ENCODE measurements at regions of chr10 and their contacts with region 1.

Region 1: DNA sequence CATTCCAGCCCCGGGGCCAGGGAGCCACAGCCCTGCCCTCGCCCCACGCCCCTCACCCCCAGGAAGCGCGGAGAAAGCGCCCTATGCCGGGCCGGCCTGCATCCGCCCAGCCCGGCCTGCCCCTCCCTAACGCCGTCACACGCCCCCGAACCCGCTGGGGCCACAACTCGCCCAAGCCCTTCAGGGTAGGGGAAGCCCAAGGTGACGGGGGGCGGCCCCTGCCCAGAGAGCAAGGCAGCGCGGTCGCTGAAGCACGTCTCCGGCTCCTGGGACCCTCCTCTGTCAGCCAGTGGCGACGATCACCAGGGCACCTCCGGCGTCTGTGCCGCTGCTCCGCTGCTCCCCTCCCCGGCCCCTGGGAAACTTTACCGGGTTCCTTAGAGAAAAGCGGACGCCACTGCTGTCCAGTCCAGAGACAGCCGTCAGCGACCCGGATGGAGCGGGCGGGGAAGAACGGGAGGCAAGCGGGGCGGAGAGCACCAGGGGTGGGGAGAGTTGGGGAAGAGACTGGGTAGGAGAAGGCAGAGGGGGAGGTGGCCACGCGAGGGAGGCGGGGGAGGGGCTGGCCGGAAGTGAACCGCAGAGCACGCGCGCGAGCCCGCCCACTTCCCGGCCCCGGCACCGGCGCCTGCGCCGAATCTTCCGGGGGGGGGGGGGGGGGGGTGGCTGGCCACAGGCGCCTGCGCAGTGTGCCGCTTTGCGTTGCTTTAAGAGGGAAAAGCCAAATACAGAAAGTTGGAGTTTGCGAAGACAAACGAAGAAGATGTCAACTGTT is at the start of gene HERC4:
- DNase-seq: peak; percentile 93
- H3K4me3 Mint-ChIP-seq: peak within 1 kb of the TSS; percentile 95
- H3K27ac Mint-ChIP-seq: peak within 1 kb of the TSS; percentile 93
- H3K4me1 Mint-ChIP-seq: peaks cover 12% of the 10 kb centered on the region
- H3K27me3 Mint-ChIP-seq: no peaks in the 10 kb centered on the region
- CTCF ChIP-seq: no peak
- total RNA-seq, gene HERC4: 57.5 and 61.5 TPM in 2 replicates

Region 2: DNA sequence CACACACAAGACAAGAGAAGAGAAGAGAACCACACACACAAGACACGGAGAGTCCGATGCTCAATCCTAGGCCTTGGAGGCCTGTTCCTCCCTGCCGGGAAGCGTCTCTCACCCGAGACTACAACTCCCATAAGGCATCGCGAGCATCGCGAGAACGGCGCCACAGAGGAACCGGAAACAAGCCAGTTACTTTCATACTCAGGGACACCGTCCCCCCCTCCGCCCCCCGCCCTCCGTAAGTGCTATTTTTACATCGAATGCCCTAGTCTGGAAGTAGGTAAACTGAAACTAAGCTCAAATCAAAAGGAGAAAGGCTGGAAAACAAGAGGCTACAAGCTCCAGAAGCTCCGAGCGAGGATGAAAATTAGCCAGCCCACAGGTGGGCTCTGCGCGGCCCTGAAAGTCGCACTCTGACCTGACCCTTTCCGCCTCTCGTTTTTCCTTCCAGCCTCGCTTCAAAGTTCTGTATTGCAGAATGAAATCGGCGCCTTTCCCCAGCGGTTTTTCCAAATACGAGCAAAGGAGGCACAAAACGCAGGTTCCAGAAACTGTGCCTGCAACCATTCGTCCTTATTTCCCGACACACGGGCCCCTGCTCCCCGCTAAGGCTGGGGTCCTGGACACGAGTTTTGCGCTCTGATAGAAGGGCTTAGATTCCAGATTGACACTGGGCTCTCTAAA is 225.5 kb before region 1 on chr10:
- CTCF ChIA-PET with region 1: no interaction called
- POLR2A ChIA-PET with region 1: interaction called, 12 read pairs
- intact Hi-C with region 1: no loop called
- DNase-seq: peak; percentile 94
- H3K4me3 Mint-ChIP-seq: peak overlapping the region; percentile 88
- H3K27ac Mint-ChIP-seq: peak overlapping the region; percentile 94
- H3K4me1 Mint-ChIP-seq: no peaks in the 10 kb centered on the region
- H3K27me3 Mint-ChIP-seq: no peaks in the 10 kb centered on the region
- CTCF ChIP-seq: no peak

Region 3: GRCh38 chr10:67861750-67862460 is 213.1 kb before region 1 on chr10:
- CTCF ChIA-PET with region 1: no interaction called
- POLR2A ChIA-PET with region 1: no interaction called
- intact Hi-C with region 1: loop called (anchors 5 kb)
- DNase-seq: no peak
- H3K4me3 Mint-ChIP-seq: no peak overlapping the region
- H3K27ac Mint-ChIP-seq: no peak overlapping the region
- H3K4me1 Mint-ChIP-seq: no peaks in the 10 kb centered on the region
- H3K27me3 Mint-ChIP-seq: no peaks in the 10 kb centered on the region
- CTCF ChIP-seq: no peak

Region 4: DNA sequence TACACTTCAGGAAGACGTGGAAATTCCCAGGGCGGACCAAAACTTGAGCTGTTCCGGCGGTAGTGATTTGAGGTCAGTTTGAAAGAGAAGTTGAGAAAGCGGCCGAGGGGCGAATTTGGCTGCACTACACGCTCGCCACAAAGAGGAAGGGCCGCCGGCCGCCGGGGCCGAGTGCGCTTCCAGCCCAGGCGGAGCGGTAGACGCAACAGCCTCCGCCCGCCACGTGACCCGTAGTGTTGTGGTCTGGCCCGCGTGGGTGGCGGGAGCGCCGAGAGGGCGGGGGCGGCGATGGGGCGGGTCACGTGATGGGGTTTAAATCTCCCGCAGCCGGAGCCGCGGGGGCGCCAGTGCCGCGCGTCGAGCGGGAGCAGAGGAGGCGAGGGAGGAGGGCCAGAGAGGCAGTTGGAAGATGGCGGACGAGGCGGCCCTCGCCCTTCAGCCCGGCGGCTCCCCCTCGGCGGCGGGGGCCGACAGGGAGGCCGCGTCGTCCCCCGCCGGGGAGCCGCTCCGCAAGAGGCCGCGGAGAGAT is 190.6 kb before region 1 on chr10 and contains the start of gene SIRT1:
- CTCF ChIA-PET with region 1: no interaction called
- POLR2A ChIA-PET with region 1: interaction called, 9 read pairs
- intact Hi-C with region 1: loop called (anchors 1 kb)
- DNase-seq: peak; percentile 93
- H3K4me3 Mint-ChIP-seq: peak within 1 kb of the TSS; percentile 78
- H3K27ac Mint-ChIP-seq: peak within 1 kb of the TSS; percentile 95
- H3K4me1 Mint-ChIP-seq: peaks cover 12% of the 10 kb centered on the region
- H3K27me3 Mint-ChIP-seq: no peaks in the 10 kb centered on the region
- CTCF ChIP-seq: no peak
- total RNA-seq, gene SIRT1: 17.9 and 23.2 TPM in 2 replicates

Region 5: GRCh38 chr10:68088744-68089143 is 13.8 kb after region 1 on chr10:
- CTCF ChIA-PET with region 1: no interaction called
- POLR2A ChIA-PET with region 1: interaction called, 15 read pairs
- intact Hi-C with region 1: no loop called
- DNase-seq: peak; percentile 67
- H3K4me3 Mint-ChIP-seq: peak overlapping the region; percentile 50
- H3K27ac Mint-ChIP-seq: peak overlapping the region; percentile 94
- H3K4me1 Mint-ChIP-seq: peaks cover 27% of the 10 kb centered on the region
- H3K27me3 Mint-ChIP-seq: no peaks in the 10 kb centered on the region
- CTCF ChIP-seq: no peak

Region 6: DNA sequence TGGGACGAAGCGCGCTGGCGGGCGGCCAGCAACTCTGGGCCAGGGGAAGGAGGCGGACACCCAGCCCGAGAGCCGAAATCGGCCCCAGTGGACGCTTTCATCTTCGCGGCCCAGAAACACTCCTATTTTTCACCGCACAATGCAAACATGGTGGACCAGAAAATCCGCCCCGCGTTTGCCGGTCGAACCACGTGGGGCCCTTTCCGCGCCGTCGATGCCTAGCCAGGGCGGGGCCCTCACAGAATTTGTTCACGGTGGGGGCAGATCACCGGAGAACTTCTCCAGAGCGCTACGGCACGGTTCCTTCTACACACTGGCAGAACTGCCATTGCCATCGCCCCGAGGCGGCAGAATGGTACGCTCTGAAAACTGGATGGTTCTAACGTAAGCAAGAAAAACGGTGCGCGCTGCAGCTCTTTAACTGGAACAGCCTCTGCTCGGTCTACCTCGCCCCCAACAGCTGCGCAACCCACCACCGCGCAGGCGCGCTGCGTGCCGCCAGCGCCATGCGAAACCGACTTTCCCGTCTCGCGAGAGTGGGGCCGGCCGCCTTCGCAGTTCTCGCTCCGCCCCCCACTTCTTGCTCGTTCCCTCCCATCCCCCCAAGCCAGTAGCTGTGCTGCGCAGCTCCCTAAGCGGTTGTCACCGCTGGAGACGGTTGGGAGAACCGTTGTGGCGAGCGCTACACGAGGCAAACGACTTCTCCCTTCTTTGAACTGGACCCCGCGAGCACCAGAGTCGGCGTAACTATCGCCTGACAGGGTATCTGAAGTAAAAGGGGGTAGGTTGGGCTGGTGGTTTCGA is 256.7 kb after region 1 on chr10 and contains the start of gene HNRNPH3:
- CTCF ChIA-PET with region 1: no interaction called
- POLR2A ChIA-PET with region 1: interaction called, 55 read pairs
- intact Hi-C with region 1: no loop called
- DNase-seq: peak; percentile 97
- H3K4me3 Mint-ChIP-seq: peak within 1 kb of the TSS; percentile 97
- H3K27ac Mint-ChIP-seq: peak within 1 kb of the TSS; percentile 99
- H3K4me1 Mint-ChIP-seq: peaks cover 29% of the 10 kb centered on the region
- H3K27me3 Mint-ChIP-seq: no peaks in the 10 kb centered on the region
- CTCF ChIP-seq: no peak
- total RNA-seq, gene HNRNPH3: 216 and 285 TPM in 2 replicates

Measured in MCF 10A (cell line).